ENCODE measurements at regions of chr7 and their contacts with region 1.

Region 1: DNA sequence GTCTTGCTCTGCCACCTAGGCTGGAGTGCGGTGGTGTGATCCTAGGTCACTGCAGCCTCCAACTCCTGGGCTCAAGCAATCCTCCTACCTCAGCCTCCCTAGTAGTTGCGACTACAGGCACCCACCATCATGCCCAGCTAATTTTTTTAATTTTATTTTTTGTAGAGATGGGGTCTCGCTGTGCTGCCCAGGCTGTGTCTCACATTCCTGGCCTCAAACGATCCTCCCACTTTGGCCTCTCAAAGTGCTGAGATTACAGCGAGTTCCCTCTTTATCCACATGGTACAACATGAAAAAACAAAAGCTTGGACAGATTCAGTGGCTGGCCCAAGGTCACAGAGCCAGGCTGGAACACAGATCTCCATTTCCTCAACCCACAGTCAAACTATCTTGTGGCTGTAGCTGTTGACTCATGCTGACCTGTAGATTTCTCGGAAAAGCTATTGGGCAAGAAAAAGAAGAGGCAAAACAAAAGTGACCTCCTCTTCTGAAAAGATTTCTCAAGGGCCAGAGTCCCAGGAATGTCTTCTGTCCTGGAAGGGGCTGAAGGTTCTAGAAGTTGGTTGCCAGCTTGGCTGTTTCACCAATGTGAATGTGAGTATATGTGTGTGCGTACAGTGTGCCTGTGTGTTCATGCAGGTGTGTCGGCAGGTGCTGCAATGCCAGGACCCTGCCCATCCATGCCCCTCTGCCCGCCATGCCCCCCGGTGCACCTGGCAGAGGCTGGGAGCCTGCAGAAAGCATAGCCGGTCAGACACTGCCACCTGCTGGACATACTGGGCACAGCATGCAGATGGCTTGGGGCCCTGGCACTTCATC is 28.4 kb downstream of the TMEM130 start:
- DNase-seq: no peak
- ATAC-seq: peak; percentile 86
- H3K4me3 ChIP-seq: no peak overlapping the region
- H3K27ac ChIP-seq: no peak overlapping the region
- H3K4me1 ChIP-seq: no peaks in the 10 kb centered on the region; the same call in 1 of the 2 replicates
- H3K27me3 ChIP-seq: peaks cover 0 to 2% of the 10 kb centered on the region in 2 experiments; a peak in 1 of 4 replicates
- CTCF ChIP-seq: peak; percentile 94 to 96 (median 96)
- EP300 ChIP-seq: no peak
- POLR2A ChIP-seq: no peak
- RAD21 ChIP-seq: peak; percentile 97

Region 2: DNA sequence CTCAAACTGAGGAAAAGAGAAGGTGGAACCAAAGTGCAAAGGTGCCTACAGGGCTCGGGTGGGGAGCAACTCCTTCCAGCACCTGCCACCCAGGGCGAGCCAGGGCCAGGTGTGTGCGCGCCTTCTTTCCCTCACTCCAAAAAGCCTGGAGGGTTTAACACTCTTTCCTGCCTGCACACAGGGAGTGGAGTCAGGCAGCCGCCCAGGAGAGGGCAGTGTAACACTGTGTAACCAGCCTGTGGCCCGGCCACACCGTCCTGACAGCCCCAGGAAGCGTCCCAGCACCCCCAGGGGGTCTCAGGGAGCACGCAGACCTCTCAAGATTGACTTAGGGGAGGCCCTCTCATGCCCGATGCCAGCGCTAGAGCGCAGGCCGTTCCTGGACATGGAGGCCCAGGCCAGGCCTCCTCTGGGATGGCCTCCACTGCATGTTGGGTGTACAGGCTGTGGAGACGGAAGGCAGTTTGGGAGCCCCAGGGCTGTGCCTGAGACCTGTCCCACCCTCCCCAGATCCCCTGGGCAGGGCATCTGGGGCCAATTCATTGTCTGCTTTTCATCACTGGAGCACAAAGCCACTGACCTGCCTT is 546.5 kb before region 1 on chr7:
- CTCF ChIA-PET with region 1: no interaction called
- POLR2A ChIA-PET with region 1: interaction called, 3 read pairs
- RAD21 ChIA-PET with region 1: no interaction called
- SMC1A ChIA-PET with region 1: no interaction called
- in situ Hi-C with region 1: loop called (anchors 5 kb)
- intact Hi-C with region 1: loop called (anchors 5 kb)
- DNase-seq: no peak
- ATAC-seq: peak; percentile 92
- H3K4me3 ChIP-seq: no peak overlapping the region
- H3K27ac ChIP-seq: no peak overlapping the region
- H3K4me1 ChIP-seq: no peaks in the 10 kb centered on the region
- H3K27me3 ChIP-seq: no peaks in the 10 kb centered on the region
- CTCF ChIP-seq: peak; percentile 66 to 79 (median 70)
- EP300 ChIP-seq: no peak
- POLR2A ChIP-seq: no peak
- RAD21 ChIP-seq: peak; percentile 73

Region 3: DNA sequence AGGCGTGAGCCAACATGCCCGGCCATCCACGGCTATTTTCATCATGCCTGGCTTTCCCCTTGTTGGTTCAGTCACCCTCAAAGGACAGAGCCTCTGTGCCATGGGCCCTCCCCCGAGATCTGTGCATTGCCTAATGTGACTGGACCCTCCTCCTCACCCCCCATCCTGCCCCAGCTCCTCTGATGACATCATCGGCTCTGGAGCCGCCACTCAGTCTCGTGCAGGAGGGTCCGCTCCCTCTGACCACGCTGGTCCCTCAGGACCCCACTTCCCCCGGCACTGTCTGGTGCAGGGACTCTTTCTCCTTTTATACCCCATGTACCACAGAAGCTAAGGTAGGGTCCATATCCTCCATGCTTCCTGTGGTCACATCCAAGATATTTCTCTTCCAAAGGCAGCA is 407.3 kb before region 1 on chr7:
- CTCF ChIA-PET with region 1: interaction called, 128 read pairs
- POLR2A ChIA-PET with region 1: no interaction called
- RAD21 ChIA-PET with region 1: interaction called, 9 read pairs
- SMC1A ChIA-PET with region 1: interaction called, 7 read pairs
- in situ Hi-C with region 1: loop called (anchors 5 kb)
- intact Hi-C with region 1: loop called (anchors 1 kb)
- DNase-seq: no peak
- ATAC-seq: no peak
- H3K4me3 ChIP-seq: no peak overlapping the region
- H3K27ac ChIP-seq: no peak overlapping the region
- H3K4me1 ChIP-seq: no peaks in the 10 kb centered on the region
- H3K27me3 ChIP-seq: no peaks in the 10 kb centered on the region; a peak in 1 of 4 replicates
- CTCF ChIP-seq: no peak
- EP300 ChIP-seq: no peak
- POLR2A ChIP-seq: no peak
- RAD21 ChIP-seq: no peak

Region 4: DNA sequence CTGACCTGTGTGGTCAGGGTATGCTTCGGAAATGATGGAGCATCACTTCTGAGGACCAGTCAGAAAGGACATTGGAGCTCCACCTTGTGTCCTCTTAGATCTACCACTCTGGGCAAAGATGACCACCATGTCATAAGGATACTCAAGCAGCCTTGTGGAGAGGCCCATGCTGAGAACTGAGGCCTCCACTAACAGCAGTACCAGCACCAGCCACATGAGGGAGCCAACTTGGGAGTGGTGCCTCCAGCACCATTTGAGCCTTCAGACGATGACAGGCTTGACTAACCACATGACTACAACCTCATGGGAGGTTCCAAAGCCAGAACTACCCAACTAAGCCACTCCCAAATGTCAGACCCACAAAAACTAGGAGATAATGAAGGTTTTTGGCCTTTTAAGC is 108.4 kb before region 1 on chr7:
- CTCF ChIA-PET with region 1: interaction called, 8 read pairs
- POLR2A ChIA-PET with region 1: no interaction called
- RAD21 ChIA-PET with region 1: interaction called, 5 read pairs
- SMC1A ChIA-PET with region 1: no interaction called
- in situ Hi-C with region 1: no loop called
- intact Hi-C with region 1: loop called (anchors 1 kb)
- DNase-seq: peak; percentile 20
- ATAC-seq: peak; percentile 93
- H3K4me3 ChIP-seq: no peak overlapping the region
- H3K27ac ChIP-seq: no peak overlapping the region
- H3K4me1 ChIP-seq: no peaks in the 10 kb centered on the region
- H3K27me3 ChIP-seq: no peaks in the 10 kb centered on the region; a peak in 1 of 4 replicates
- CTCF ChIP-seq: peak; percentile 52 to 78 (median 73)
- EP300 ChIP-seq: no peak
- POLR2A ChIP-seq: no peak
- RAD21 ChIP-seq: peak; percentile 49

Region 5: GRCh38 chr7:98753989-98754479 is 87.4 kb before region 1 on chr7:
- CTCF ChIA-PET with region 1: interaction called, 3 read pairs
- POLR2A ChIA-PET with region 1: no interaction called
- RAD21 ChIA-PET with region 1: no interaction called
- SMC1A ChIA-PET with region 1: interaction called, 3 read pairs
- in situ Hi-C with region 1: loop called (anchors 5 kb)
- intact Hi-C with region 1: loop called (anchors 2 kb)
- DNase-seq: no peak
- ATAC-seq: no peak
- H3K4me3 ChIP-seq: no peak overlapping the region
- H3K27ac ChIP-seq: no peak overlapping the region
- H3K4me1 ChIP-seq: no peaks in the 10 kb centered on the region
- H3K27me3 ChIP-seq: no peaks in the 10 kb centered on the region
- CTCF ChIP-seq: no peak
- EP300 ChIP-seq: no peak
- POLR2A ChIP-seq: no peak
- RAD21 ChIP-seq: no peak

Region 6: DNA sequence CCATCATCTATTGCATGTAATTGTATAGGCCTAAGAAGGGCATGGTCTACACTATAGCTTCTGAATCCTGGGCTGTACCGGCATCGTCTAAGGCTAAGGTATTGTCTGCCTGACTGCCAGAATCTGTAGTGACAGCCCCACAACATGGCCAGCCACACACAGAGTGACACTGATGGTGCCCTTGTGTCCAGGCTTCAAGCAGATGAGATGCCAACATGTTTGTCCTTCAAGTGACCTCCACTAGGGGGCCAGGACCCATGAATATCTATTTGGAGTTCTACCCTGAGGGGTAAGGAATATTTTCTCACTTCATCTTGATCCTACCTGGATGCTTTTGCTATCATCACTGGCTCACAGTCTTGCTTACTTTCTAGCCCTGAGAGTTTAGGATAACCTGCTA is 892.1 kb after region 1 on chr7:
- CTCF ChIA-PET with region 1: no interaction called
- POLR2A ChIA-PET with region 1: no interaction called
- RAD21 ChIA-PET with region 1: no interaction called
- SMC1A ChIA-PET with region 1: no interaction called
- in situ Hi-C with region 1: no loop called
- intact Hi-C with region 1: no loop called
- DNase-seq: no peak
- ATAC-seq: peak; percentile 48; the same call in 2 of the 3 replicates
- H3K4me3 ChIP-seq: no peak overlapping the region
- H3K27ac ChIP-seq: no peak overlapping the region
- H3K4me1 ChIP-seq: no peaks in the 10 kb centered on the region
- H3K27me3 ChIP-seq: no peaks in the 10 kb centered on the region
- CTCF ChIP-seq: peak in 2 of 3 experiments; percentile 42 to 58; a peak in 5 of 6 replicates
- EP300 ChIP-seq: no peak
- POLR2A ChIP-seq: no peak
- RAD21 ChIP-seq: peak; percentile 18; the same call in 1 of the 2 replicates